Dendritic cell treated with granulocyte-macrophage colony-stimulating factor and Interleukin-4, amounts not matched to agents 40 ng/mL and 50 ng/mL, for 4 days (primary cell): ENCODE measurements at regions of chr17 and their contacts with region 1.

Region 1: GRCh38 chr17:64599187-64599676 is 62.9 kb downstream of the SMURF2 start:
- H3K4me3 Mint-ChIP-seq: peak overlapping the region; percentile 23
- H3K27ac Mint-ChIP-seq: peak overlapping the region; percentile 45
- H3K4me1 Mint-ChIP-seq: peaks cover 23% of the 10 kb centered on the region
- H3K27me3 Mint-ChIP-seq: no peaks in the 10 kb centered on the region

Region 2: GRCh38 chr17:64515419-64515818 is 83.8 kb before region 1 on chr17:
- intact Hi-C with region 1: loop called (anchors 10 kb)
- H3K4me3 Mint-ChIP-seq: no peak overlapping the region
- H3K27ac Mint-ChIP-seq: no peak overlapping the region
- H3K4me1 Mint-ChIP-seq: peaks cover 12% of the 10 kb centered on the region
- H3K27me3 Mint-ChIP-seq: no peaks in the 10 kb centered on the region

Region 3: DNA sequence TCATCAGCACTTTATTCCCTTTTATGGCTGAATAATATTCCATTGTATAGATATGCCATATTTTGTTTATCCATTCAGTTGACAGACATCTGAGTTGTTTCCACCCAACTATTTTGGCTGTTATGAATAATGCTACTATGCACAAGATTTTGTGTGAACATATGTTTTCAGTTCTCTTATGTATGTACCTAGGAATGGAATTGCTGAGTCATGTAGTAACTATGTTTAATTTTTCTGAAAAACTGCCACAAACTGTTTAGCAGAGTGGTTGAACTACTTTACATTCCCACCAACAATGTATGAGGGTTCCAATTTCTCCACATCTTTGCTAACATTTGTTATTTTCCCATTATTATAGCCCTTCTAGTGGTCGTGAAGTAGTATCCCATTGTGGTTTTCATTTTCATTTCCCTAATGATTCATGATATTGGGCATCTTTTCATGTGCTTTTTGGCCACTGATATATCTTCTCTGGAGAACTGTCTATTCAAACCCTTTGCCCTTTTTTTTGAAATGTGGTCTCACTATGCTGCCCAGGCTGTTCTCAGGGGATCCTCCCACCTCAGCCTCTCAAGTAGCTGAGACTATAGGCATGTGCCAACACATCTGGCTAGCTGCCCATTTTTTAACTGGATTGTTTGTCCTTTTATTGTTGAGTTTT is 36.5 kb after region 1 on chr17:
- intact Hi-C with region 1: loop called (anchors 5 kb)
- H3K4me3 Mint-ChIP-seq: peak overlapping the region; percentile 57
- H3K27ac Mint-ChIP-seq: peak overlapping the region; percentile 79
- H3K4me1 Mint-ChIP-seq: peaks cover 38% of the 10 kb centered on the region
- H3K27me3 Mint-ChIP-seq: no peaks in the 10 kb centered on the region

Region 4: GRCh38 chr17:64661976-64662773 is 62.9 kb after region 1 on chr17 and contains the start of gene SMURF2:
- intact Hi-C with region 1: no loop called
- H3K4me3 Mint-ChIP-seq: peak within 1 kb of the TSS; percentile 96
- H3K27ac Mint-ChIP-seq: peak within 1 kb of the TSS; percentile 93
- H3K4me1 Mint-ChIP-seq: peaks cover 32% of the 10 kb centered on the region
- H3K27me3 Mint-ChIP-seq: peaks cover 3% of the 10 kb centered on the region

Region 5: GRCh38 chr17:64950871-64951270 is 351.6 kb after region 1 on chr17:
- intact Hi-C with region 1: no loop called
- H3K4me3 Mint-ChIP-seq: no peak overlapping the region
- H3K27ac Mint-ChIP-seq: no peak overlapping the region
- H3K4me1 Mint-ChIP-seq: no peaks in the 10 kb centered on the region
- H3K27me3 Mint-ChIP-seq: no peaks in the 10 kb centered on the region